ENCODE measurements at regions of chr2 and their contacts with region 1.

Region 1: DNA sequence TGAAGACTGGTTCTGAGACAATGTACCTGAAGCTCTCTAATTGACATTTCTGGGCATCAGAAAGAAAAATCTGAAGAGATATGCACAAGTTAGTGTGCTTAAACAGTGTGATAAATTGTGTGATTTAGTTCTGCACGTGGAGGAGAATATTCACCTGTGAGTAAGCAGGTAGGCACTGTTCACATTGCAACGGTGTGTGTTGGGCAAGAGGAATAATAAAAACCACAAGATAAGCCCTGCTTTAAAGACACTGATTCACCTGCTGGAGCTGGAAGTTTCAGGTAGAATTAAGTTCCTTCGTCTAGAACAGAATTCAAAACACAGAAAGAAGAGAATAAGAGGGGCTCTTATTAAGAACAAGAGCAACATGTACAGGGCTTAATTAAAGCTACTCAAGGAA is 864.3 kb upstream of the SOX11 start:
- DNase-seq: no peak
- ATAC-seq: no peak
- H3K4me3 ChIP-seq: no peak overlapping the region
- H3K27ac ChIP-seq: no peak overlapping the region
- H3K4me1 ChIP-seq: no peaks in the 10 kb centered on the region
- H3K27me3 ChIP-seq: no peaks in the 10 kb centered on the region
- CTCF ChIP-seq: no peak
- POLR2A ChIP-seq: no peak

Region 2: GRCh38 chr2:4792126-4792525 is 35.7 kb before region 1 on chr2:
- intact Hi-C with region 1: loop called in 1 of 10 experiments (anchors 2 kb)
- DNase-seq: no peak
- ATAC-seq: no peak
- H3K4me3 ChIP-seq: no peak overlapping the region
- H3K27ac ChIP-seq: no peak overlapping the region
- H3K4me1 ChIP-seq: no peaks in the 10 kb centered on the region
- H3K27me3 ChIP-seq: no peaks in the 10 kb centered on the region
- CTCF ChIP-seq: no peak
- POLR2A ChIP-seq: no peak

Region 3: DNA sequence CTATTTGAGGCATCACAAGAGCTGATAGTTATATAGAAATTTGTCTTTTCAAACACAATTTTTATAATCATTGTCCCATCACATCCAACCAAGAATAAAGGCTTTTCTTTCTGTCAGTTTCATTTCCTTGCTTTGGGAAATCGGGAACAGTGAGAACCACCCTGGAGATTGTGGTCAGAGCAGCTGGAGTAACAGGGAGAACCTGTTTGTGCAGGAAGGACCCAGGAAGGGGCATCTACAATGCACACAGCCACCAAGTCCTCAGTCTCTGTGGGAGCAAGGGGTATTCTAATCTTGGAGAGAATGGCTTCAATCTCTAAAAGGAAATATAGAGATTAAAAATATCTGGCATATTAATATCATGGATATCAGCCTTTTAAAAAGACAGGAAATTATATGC is 128.1 kb after region 1 on chr2:
- intact Hi-C with region 1: no loop called
- DNase-seq: no peak
- ATAC-seq: no peak
- H3K4me3 ChIP-seq: no peak overlapping the region
- H3K27ac ChIP-seq: no peak overlapping the region
- H3K4me1 ChIP-seq: no peaks in the 10 kb centered on the region
- H3K27me3 ChIP-seq: peaks cover 0 to 9% (median 0%) of the 10 kb centered on the region in 9 donors
- CTCF ChIP-seq: no peak
- POLR2A ChIP-seq: no peak

Region 4: DNA sequence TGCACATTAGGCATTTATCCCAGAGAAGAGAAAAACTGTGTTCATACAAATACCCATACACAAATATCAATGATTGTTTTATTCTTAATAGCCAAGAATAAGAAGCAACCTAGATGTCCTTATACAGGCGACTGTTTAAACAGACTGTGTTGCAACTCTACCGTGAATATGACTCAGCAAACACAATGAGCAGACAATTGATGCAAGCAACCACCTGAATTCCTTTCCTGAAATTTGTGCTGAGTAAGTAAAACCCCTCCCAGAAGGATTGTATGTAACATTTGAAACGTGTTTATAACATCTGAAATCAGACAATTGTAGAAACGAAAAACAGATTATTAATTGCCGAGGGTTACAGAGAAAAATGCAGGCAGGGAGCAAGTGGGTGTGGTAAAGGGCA is 242.4 kb after region 1 on chr2:
- intact Hi-C with region 1: no loop called
- DNase-seq: no peak
- ATAC-seq: no peak
- H3K4me3 ChIP-seq: no peak overlapping the region
- H3K27ac ChIP-seq: no peak overlapping the region
- H3K4me1 ChIP-seq: no peaks in the 10 kb centered on the region
- H3K27me3 ChIP-seq: peaks cover 0 to 3% (median 0%) of the 10 kb centered on the region in 9 donors
- CTCF ChIP-seq: no peak
- POLR2A ChIP-seq: no peak

Region 5: DNA sequence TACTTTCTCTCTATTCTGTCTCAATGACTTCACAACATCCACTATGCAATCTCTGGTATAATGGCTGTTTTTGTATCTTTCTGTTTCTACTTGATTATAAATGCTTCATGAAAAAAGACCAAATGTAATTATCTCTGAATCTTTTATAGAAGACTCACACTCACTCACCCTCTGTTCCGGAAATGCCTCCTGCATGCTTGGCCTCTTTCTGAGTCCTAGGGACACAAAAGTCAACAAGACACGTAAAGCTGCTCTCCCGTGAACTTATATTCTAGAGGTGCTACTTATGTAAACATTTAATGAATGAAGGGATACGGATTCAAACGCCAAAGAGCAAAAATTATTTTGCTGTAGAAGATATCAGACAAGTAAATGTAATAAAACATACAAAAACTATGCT is 362.2 kb after region 1 on chr2:
- intact Hi-C with region 1: no loop called
- DNase-seq: no peak
- ATAC-seq: no peak
- H3K4me3 ChIP-seq: no peak overlapping the region
- H3K27ac ChIP-seq: no peak overlapping the region
- H3K4me1 ChIP-seq: no peaks in the 10 kb centered on the region
- H3K27me3 ChIP-seq: no peaks in the 10 kb centered on the region
- CTCF ChIP-seq: no peak
- POLR2A ChIP-seq: no peak

Measured in heart left ventricle (tissue), 16 donors.